ENCODE measurements at regions of chr9 and their contacts with region 1.

Region 1: GRCh38 chr9:109861499-109861898 is 81.5 kb downstream of the PALM2AKAP2 start:
- DNase-seq: no peak

Region 2: DNA sequence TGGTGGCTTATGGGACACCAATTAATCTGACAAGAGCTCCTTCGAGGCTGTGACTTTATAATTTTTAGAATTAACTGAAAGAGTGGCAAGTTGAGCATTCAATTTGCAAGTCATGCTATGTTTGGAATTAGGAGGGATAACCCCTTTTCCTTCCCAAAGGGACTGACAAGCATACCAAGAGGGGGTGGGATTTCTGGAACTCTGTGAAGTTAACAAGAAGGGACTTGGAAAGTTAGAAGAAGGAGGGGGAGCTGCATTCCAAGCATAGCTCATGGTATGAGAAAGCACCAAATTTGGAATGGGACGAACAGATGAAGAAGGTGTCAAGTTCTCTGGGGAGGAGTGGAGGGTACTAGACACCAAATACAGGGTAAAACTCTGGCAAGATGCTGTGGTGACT is 90.4 kb before region 1 on chr9:
- intact Hi-C with region 1: loop called (anchors 5 kb)
- DNase-seq: no peak

Region 3: DNA sequence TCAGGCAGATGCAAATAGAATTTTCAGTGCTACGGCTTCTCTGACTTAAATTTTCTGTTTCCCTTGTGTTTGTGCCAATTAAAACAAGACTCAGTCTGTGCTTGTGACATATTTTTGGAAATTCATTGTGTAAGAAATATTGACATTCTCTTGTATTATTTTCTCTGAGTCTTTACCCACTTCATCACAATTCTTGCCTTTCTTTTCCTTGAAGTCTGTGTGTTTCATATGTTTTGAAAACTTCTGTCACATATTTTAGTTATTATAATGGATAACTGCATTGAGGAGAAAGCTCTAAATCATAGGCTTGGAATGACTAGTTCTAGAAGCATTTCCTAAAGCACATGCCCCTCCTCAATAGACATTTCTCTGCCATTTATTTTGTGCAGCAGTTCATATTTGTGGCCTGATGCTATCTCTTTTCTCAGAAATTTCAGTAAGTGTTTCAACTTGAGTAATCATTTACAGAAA is 125.1 kb after region 1 on chr9:
- intact Hi-C with region 1: no loop called
- DNase-seq: no peak

Measured in cardiac septum (tissue), 1 donor.